ENCODE measurements at regions of chr19 and their contacts with region 1.

Region 1: GRCh38 chr19:37370880-37371661 is at the start of gene ZNF527:
- DNase-seq: peak; percentile 98
- H3K4me3 Mint-ChIP-seq: peak within 1 kb of the TSS; percentile 93
- H3K27ac Mint-ChIP-seq: peak within 1 kb of the TSS; percentile 89
- H3K4me1 Mint-ChIP-seq: peaks cover 17% of the 10 kb centered on the region
- H3K27me3 Mint-ChIP-seq: no peaks in the 10 kb centered on the region
- total RNA-seq, gene ZNF527: 4.3 to 4.8 TPM

Region 2: DNA sequence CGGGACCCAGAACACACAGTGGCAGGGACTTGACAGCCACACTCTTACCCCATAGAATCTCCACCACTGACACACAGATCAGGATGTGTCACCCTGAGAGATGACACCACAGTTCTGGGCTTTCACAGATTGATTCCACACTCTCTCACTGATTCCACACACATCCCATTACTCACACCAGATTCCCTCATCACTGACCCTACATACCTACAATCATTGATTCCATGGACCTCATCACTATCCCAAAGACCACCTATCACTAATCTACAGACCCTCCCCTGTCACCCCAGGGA is 57.8 kb before region 1 on chr19:
- CTCF ChIA-PET with region 1: interaction called, 7 read pairs
- POLR2A ChIA-PET with region 1: interaction called, 11 read pairs
- DNase-seq: no peak
- H3K4me3 Mint-ChIP-seq: peak overlapping the region; percentile 64
- H3K27ac Mint-ChIP-seq: peak overlapping the region; percentile 34
- H3K4me1 Mint-ChIP-seq: peaks cover 17% of the 10 kb centered on the region
- H3K27me3 Mint-ChIP-seq: no peaks in the 10 kb centered on the region

Region 3: DNA sequence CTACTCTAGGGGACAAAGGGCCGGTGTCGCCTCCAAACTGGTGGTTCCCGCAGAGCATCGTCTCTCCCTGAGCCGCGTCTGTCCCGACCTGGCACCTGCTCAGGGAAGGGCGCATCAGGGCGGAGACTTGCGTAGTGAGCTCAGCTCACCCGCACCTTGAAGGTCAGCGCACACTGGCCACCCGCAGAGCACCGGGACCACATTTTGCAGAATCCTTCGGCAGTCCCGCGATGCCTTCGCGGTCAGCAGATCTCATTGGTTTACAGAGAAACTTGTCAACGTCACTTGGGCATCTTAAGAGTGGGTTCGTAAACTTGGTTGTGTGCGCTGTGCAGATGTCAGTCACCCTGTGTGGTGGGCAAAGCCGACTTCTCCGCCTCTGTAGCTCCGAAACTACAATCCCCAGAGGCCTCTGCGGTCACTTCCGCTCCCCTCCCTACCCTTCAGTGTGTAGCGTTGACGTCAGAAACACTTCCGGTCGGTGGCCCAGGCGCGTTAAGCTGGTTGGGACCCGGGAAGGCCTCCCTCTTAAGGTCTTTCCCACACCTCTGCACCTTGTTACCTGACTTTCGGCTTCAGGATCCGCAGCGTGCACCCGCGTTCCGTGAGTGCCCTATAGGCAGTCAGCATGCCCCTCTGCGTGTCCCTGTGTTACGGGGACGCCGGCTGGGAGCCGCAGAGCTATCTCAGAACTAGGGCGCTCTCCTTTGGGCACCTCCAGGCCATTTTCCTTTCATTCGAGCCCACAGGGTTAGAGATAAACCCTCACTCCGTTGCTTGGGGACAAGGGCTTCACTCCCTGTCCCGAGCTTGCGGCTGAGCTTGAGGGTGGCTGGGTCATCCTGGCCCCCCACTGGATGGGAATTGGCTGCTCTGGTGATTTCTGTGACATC is 36.6 kb before region 1 on chr19:
- CTCF ChIA-PET with region 1: interaction called, 4 read pairs
- POLR2A ChIA-PET with region 1: interaction called, 15 read pairs
- DNase-seq: peak; percentile 90
- H3K4me3 Mint-ChIP-seq: peak overlapping the region; percentile 86
- H3K27ac Mint-ChIP-seq: peak overlapping the region; percentile 78
- H3K4me1 Mint-ChIP-seq: peaks cover 22% of the 10 kb centered on the region
- H3K27me3 Mint-ChIP-seq: no peaks in the 10 kb centered on the region

Region 4: GRCh38 chr19:37413243-37414084 is 42.4 kb after region 1 on chr19:
- CTCF ChIA-PET with region 1: no interaction called
- POLR2A ChIA-PET with region 1: no interaction called
- DNase-seq: no peak
- H3K4me3 Mint-ChIP-seq: no peak overlapping the region
- H3K27ac Mint-ChIP-seq: no peak overlapping the region
- H3K4me1 Mint-ChIP-seq: no peaks in the 10 kb centered on the region
- H3K27me3 Mint-ChIP-seq: no peaks in the 10 kb centered on the region

Region 5: GRCh38 chr19:37466798-37467607 is 95.9 kb after region 1 on chr19 and contains the start of gene ZNF569:
- CTCF ChIA-PET with region 1: interaction called, 9 read pairs
- POLR2A ChIA-PET with region 1: interaction called, 13 read pairs
- DNase-seq: peak; percentile 91
- H3K4me3 Mint-ChIP-seq: peak within 1 kb of the TSS; percentile 97
- H3K27ac Mint-ChIP-seq: peak within 1 kb of the TSS; percentile 95
- H3K4me1 Mint-ChIP-seq: peaks cover 41% of the 10 kb centered on the region
- H3K27me3 Mint-ChIP-seq: no peaks in the 10 kb centered on the region
- total RNA-seq, gene ZNF569: 6.4 to 7.6 TPM

Region 6: GRCh38 chr19:37594304-37594981 is 223.4 kb after region 1 on chr19 and contains the starts of genes ZNF540 and ZNF571:
- CTCF ChIA-PET with region 1: interaction called, 7 read pairs
- POLR2A ChIA-PET with region 1: interaction called, 11 read pairs
- DNase-seq: peak; percentile 91
- H3K4me3 Mint-ChIP-seq: peak within 1 kb of the TSS; percentile 90
- H3K27ac Mint-ChIP-seq: peak within 1 kb of the TSS; percentile 80
- H3K4me1 Mint-ChIP-seq: peaks cover 17% of the 10 kb centered on the region
- H3K27me3 Mint-ChIP-seq: no peaks in the 10 kb centered on the region
- total RNA-seq, gene ZNF540: 1.4 to 1.5 TPM
- total RNA-seq, gene ZNF571: 1.5 to 2.9 TPM